GM12878 (cell line): ENCODE measurements at regions of chr2 and their contacts with region 1.

Region 1: GRCh38 chr2:143259368-143259958 is 130.2 kb downstream of the ARHGAP15 start:
- DNase-seq: peak; percentile 36
- ATAC-seq: peak; percentile 83
- H3K4me3 ChIP-seq: no peak overlapping the region
- H3K27ac ChIP-seq: no peak overlapping the region
- H3K4me1 ChIP-seq: peaks cover 17% of the 10 kb centered on the region; the same call in 1 of the 2 replicates
- H3K27me3 ChIP-seq: no peaks in the 10 kb centered on the region
- CTCF ChIP-seq: peak; percentile 68 to 73 (median 71)
- EP300 ChIP-seq: no peak
- POLR2A ChIP-seq: no peak
- RAD21 ChIP-seq: peak; percentile 87

Region 2: GRCh38 chr2:143034292-143035074 is 225.0 kb before region 1 on chr2:
- CTCF ChIA-PET with region 1: interaction called, 27 read pairs
- POLR2A ChIA-PET with region 1: no interaction called
- RAD21 ChIA-PET with region 1: interaction called, 4 read pairs
- SMC1A ChIA-PET with region 1: interaction called, 5 read pairs
- in situ Hi-C with region 1: no loop called
- intact Hi-C with region 1: loop called (anchors 1 kb)
- DNase-seq: peak; percentile 53
- ATAC-seq: peak; percentile 86
- H3K4me3 ChIP-seq: no peak overlapping the region
- H3K27ac ChIP-seq: no peak overlapping the region
- H3K4me1 ChIP-seq: no peaks in the 10 kb centered on the region
- H3K27me3 ChIP-seq: no peaks in the 10 kb centered on the region
- CTCF ChIP-seq: peak; percentile 78 to 98 (median 93); a peak in 5 of 6 replicates
- EP300 ChIP-seq: no peak
- POLR2A ChIP-seq: no peak
- RAD21 ChIP-seq: peak; percentile 78

Region 3: DNA sequence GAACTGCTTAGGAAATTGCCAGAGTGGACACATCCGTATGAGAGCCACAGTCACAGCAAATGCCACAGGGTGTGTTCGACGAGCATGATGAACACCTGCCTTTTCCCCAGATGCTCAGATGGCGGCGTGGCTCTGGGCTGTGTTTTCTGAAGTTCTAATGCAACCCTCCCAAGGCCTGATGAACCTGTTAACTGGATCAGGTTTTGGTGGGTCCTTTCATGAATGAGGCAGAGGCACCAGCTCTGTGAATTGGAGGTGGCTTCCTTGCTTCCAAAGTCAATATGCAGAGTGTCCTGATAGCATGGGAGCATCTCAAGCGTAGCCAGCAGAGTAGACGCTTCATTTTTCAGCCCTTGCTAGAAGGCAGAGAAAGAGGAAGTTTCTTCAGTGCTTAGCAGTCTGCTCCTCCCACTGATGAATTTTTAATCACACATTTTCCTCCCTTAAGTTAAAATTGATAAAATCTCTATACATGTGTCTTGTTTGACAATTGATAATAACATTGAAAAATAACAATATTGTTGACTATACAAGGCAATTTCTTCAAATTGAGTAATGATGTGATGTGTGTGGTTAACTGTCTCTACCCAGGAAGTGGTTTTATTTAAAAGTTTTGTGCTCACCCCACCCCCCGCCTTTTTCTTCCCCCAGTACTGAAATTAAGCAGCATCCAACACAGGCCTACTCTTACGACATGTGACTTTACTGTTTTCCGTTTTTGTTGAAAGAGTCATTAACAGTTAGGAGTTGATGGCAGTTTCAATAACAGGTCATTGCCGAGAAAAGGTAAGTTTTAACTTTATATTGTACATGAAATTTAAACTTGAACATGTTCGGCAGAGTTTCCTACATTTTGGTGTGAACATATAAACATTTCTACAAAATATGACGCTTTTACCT is 130.5 kb before region 1 on chr2 and contains the start of gene ARHGAP15:
- CTCF ChIA-PET with region 1: interaction called, 12 read pairs
- POLR2A ChIA-PET with region 1: interaction called, 3 read pairs
- RAD21 ChIA-PET with region 1: interaction called, 8 read pairs
- SMC1A ChIA-PET with region 1: interaction called, 7 read pairs
- in situ Hi-C with region 1: no loop called
- intact Hi-C with region 1: no loop called
- DNase-seq: peak; percentile 85
- ATAC-seq: peak; percentile 86
- H3K4me3 ChIP-seq: peak within 1 kb of the TSS; percentile 74
- H3K27ac ChIP-seq: peak within 1 kb of the TSS; percentile 88
- H3K4me1 ChIP-seq: peaks cover 10% of the 10 kb centered on the region
- H3K27me3 ChIP-seq: no peaks in the 10 kb centered on the region
- CTCF ChIP-seq: no peak
- EP300 ChIP-seq: peak; percentile 44 to 71; a peak in 3 of 4 replicates
- POLR2A ChIP-seq: peak; percentile 85
- RAD21 ChIP-seq: no peak
- polyA plus RNA-seq, gene ARHGAP15: 66.6 to 69.9 TPM

Region 4: GRCh38 chr2:143205106-143205764 is 54.2 kb before region 1 on chr2:
- CTCF ChIA-PET with region 1: interaction called, 28 read pairs
- POLR2A ChIA-PET with region 1: no interaction called
- RAD21 ChIA-PET with region 1: interaction called, 8 read pairs
- SMC1A ChIA-PET with region 1: interaction called, 5 read pairs
- in situ Hi-C with region 1: no loop called
- intact Hi-C with region 1: no loop called
- DNase-seq: no peak
- ATAC-seq: peak; percentile 81
- H3K4me3 ChIP-seq: no peak overlapping the region
- H3K27ac ChIP-seq: no peak overlapping the region
- H3K4me1 ChIP-seq: no peaks in the 10 kb centered on the region
- H3K27me3 ChIP-seq: no peaks in the 10 kb centered on the region
- CTCF ChIP-seq: peak in 1 of 3 experiments; percentile 43; a peak in 3 of 6 replicates
- EP300 ChIP-seq: no peak
- POLR2A ChIP-seq: no peak
- RAD21 ChIP-seq: 0 out of 2 replicates have a peak, but pooled peaks have one; percentile 3

Region 5: DNA sequence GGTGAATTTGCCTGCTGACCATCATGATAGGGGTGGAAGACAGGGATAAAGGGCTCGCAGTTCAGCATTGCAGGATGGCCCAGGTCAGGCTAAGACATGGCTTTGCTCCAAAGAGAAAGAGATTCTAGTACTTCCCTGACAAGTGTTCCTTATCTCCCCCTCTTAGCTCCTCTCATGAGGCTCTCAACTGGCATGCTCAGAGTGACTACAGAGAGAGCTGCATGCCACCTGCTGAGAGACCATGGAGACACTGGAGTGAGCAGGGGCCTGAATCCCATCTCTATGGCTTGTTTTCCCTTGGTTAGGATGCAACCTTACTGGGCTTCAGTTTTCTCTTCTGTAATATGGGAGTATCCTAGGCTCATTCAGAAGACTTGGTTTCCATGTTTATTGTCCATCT is 35.9 kb before region 1 on chr2:
- CTCF ChIA-PET with region 1: interaction called, 18 read pairs
- POLR2A ChIA-PET with region 1: no interaction called
- RAD21 ChIA-PET with region 1: interaction called, 23 read pairs
- SMC1A ChIA-PET with region 1: interaction called, 21 read pairs
- in situ Hi-C with region 1: no loop called
- intact Hi-C with region 1: loop called (anchors 2 kb)
- DNase-seq: no peak
- ATAC-seq: no peak
- H3K4me3 ChIP-seq: no peak overlapping the region
- H3K27ac ChIP-seq: no peak overlapping the region
- H3K4me1 ChIP-seq: no peaks in the 10 kb centered on the region
- H3K27me3 ChIP-seq: no peaks in the 10 kb centered on the region
- CTCF ChIP-seq: no peak
- EP300 ChIP-seq: no peak
- POLR2A ChIP-seq: no peak
- RAD21 ChIP-seq: no peak

Region 6: GRCh38 chr2:143246815-143247744 is 12.4 kb before region 1 on chr2:
- CTCF ChIA-PET with region 1: interaction called, 41 read pairs
- POLR2A ChIA-PET with region 1: no interaction called
- RAD21 ChIA-PET with region 1: no interaction called
- SMC1A ChIA-PET with region 1: interaction called, 10 read pairs
- in situ Hi-C with region 1: no loop called
- intact Hi-C with region 1: no loop called
- DNase-seq: no peak
- ATAC-seq: no peak
- H3K4me3 ChIP-seq: no peak overlapping the region
- H3K27ac ChIP-seq: no peak overlapping the region
- H3K4me1 ChIP-seq: no peaks in the 10 kb centered on the region
- H3K27me3 ChIP-seq: no peaks in the 10 kb centered on the region
- CTCF ChIP-seq: no peak
- EP300 ChIP-seq: no peak
- POLR2A ChIP-seq: no peak
- RAD21 ChIP-seq: no peak

Region 7: DNA sequence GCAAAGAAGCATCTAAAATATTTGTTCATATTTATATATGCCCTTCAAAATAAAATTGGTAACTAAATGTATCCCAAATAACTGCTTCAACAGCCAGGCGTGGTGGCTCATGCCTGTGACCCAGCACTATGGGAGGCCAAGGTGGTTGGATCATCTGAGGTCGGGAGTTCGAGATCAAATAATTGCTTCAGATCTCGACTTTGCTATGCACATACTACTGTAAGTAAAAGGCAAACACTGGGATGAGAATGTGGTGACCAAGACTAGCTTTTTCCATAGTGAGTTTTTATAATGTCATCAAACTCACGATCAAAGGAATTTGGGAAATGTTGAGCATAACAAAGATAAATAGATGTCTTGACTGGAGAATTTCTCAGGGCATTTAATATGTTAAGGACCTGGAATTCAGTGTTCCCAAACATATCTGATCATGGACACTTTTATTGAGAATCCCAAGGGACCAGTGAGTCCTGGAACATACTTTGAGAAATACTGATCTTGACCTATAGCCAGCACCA is 75.3 kb after region 1 on chr2:
- CTCF ChIA-PET with region 1: no interaction called
- POLR2A ChIA-PET with region 1: no interaction called
- RAD21 ChIA-PET with region 1: no interaction called
- SMC1A ChIA-PET with region 1: no interaction called
- in situ Hi-C with region 1: no loop called
- intact Hi-C with region 1: no loop called
- DNase-seq: no peak
- ATAC-seq: no peak
- H3K4me3 ChIP-seq: no peak overlapping the region
- H3K27ac ChIP-seq: no peak overlapping the region
- H3K4me1 ChIP-seq: no peaks in the 10 kb centered on the region
- H3K27me3 ChIP-seq: no peaks in the 10 kb centered on the region
- CTCF ChIP-seq: no peak
- EP300 ChIP-seq: no peak
- POLR2A ChIP-seq: no peak
- RAD21 ChIP-seq: no peak